Dorsolateral prefrontal cortex (tissue), 120 donors: ENCODE measurements at regions of chr11 and their contacts with region 1.

Region 1: GRCh38 chr11:94767761-94768601 is at the start of gene AMOTL1:
- DNase-seq: peak; percentile 70 to 90 (median 84)
- H3K4me3 ChIP-seq: peak within 1 kb of the TSS; percentile 65 to 95 (median 84)
- H3K27ac ChIP-seq: peak within 1 kb of the TSS in 56 of 59 donors; percentile 25 to 92 (median 77)
- H3K27me3 ChIP-seq: no peaks in the 10 kb centered on the region
- CTCF ChIP-seq: peak in 16 of 56 donors; percentile 7 to 37 (median 18)
- total RNA-seq, gene AMOTL1: 13.5 to 35.0 (median 20.8) TPM

Region 2: GRCh38 chr11:94171693-94172440 is 596.1 kb before region 1 on chr11:
- intact Hi-C with region 1: no loop called
- DNase-seq: peak in 6 of 10 donors; percentile 24 to 63 (median 47)
- H3K4me3 ChIP-seq: no peak overlapping the region
- H3K27ac ChIP-seq: no peak overlapping the region
- H3K27me3 ChIP-seq: no peaks in the 10 kb centered on the region
- CTCF ChIP-seq: peak in 55 of 56 donors; percentile 21 to 76 (median 62)

Region 3: GRCh38 chr11:94623120-94623735 is 144.8 kb before region 1 on chr11:
- intact Hi-C with region 1: loop called in 1 of 2 experiments (anchors 10 kb)
- DNase-seq: peak in 2 of 10 donors; percentile 41 to 42
- H3K4me3 ChIP-seq: no peak overlapping the region
- H3K27ac ChIP-seq: no peak overlapping the region
- H3K27me3 ChIP-seq: no peaks in the 10 kb centered on the region
- CTCF ChIP-seq: peak; percentile 41 to 87 (median 70)

Region 4: GRCh38 chr11:94741022-94741679 is 26.8 kb before region 1 on chr11:
- intact Hi-C with region 1: loop called in 1 of 2 experiments (anchors 2 kb)
- DNase-seq: peak in 4 of 10 donors; percentile 31 to 36 (median 32)
- H3K4me3 ChIP-seq: peak overlapping the region; percentile 52 to 81 (median 68)
- H3K27ac ChIP-seq: peak overlapping the region in 20 of 59 donors; percentile 5 to 72 (median 40)
- H3K27me3 ChIP-seq: no peaks in the 10 kb centered on the region
- CTCF ChIP-seq: peak in 55 of 56 donors; percentile 17 to 60 (median 43)